ENCODE measurements at regions of chr7 and their contacts with region 1.

Region 1: DNA sequence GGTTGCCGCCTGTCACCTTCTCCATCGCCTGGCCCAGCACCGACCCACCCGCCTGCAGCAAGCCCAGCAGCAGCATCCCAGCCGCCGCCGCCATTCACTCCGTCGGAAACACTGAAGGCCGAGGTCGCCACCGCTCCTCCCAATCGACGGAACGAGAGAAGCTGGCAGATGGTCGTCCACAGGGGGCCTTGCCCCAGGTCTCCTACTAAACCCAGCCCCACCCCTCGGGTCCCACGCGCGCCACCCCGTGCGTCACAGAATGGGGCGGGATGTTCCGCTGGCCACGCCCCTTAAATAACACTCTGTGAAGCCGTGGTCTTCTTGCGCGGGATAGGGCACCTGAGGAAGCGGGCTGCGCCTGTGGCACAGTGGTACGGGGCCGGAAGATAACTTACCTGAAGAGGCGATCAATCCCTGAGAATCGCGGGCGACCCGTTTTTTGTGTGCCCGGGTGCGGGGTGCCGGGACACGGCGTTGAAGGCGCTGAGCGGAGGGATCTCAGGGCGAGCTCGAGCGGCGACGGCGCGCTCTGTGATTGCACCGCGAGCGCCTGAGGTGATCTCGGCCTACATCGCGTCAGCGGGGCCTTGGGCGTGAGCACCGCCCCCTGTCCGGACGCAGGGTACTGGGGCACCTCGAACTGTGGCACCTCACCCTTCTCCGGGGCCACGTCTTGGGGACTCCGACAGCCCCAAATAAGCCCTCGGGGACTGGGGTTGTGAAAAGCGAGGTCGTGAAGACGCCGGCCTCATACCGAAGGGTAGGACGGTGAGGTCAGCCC is at the start of gene CYP51A1:
- DNase-seq: peak; percentile 94
- ATAC-seq: peak; percentile 92
- H3K4me3 Mint-ChIP-seq: peak within 1 kb of the TSS; percentile 95
- H3K27ac Mint-ChIP-seq: peak within 1 kb of the TSS; percentile 100
- H3K4me1 Mint-ChIP-seq: peaks cover 34% of the 10 kb centered on the region
- H3K27me3 Mint-ChIP-seq: no peaks in the 10 kb centered on the region
- total RNA-seq, gene CYP51A1: 36.2 to 36.4 TPM

Region 2: GRCh38 chr7:91940572-91941341 is 193.7 kb before region 1 on chr7 and contains the start of gene AKAP9:
- CTCF ChIA-PET with region 1: interaction called, 4 read pairs
- POLR2A ChIA-PET with region 1: interaction called, 14 read pairs
- DNase-seq: peak; percentile 92
- ATAC-seq: peak; percentile 96
- H3K4me3 Mint-ChIP-seq: peak within 1 kb of the TSS; percentile 86
- H3K27ac Mint-ChIP-seq: peak within 1 kb of the TSS; percentile 95
- H3K4me1 Mint-ChIP-seq: peaks cover 22% of the 10 kb centered on the region
- H3K27me3 Mint-ChIP-seq: no peaks in the 10 kb centered on the region
- total RNA-seq, gene AKAP9: 32.7 to 41.5 TPM

Region 3: DNA sequence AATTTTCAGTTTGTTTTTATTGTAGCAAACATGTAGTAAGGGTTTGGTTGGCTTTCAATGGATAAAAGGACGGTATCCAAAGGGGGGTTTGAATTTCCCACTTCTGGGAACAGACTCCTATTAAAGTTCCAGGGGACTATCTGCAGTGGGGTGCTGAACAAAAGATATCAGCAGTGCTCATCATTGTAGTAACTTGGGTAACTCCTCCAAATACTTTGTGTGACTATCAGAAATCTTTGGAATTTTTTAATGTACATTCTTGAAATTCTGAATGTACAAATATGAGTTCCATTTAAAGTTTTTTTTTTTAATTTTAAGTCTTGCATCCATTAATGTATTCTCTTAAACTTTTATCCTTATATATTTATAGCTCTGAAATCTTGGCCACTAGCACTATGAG is 42.3 kb before region 1 on chr7:
- CTCF ChIA-PET with region 1: no interaction called
- POLR2A ChIA-PET with region 1: no interaction called
- DNase-seq: no peak
- ATAC-seq: no peak
- H3K4me3 Mint-ChIP-seq: no peak overlapping the region
- H3K27ac Mint-ChIP-seq: no peak overlapping the region
- H3K4me1 Mint-ChIP-seq: no peaks in the 10 kb centered on the region
- H3K27me3 Mint-ChIP-seq: no peaks in the 10 kb centered on the region

Region 4: DNA sequence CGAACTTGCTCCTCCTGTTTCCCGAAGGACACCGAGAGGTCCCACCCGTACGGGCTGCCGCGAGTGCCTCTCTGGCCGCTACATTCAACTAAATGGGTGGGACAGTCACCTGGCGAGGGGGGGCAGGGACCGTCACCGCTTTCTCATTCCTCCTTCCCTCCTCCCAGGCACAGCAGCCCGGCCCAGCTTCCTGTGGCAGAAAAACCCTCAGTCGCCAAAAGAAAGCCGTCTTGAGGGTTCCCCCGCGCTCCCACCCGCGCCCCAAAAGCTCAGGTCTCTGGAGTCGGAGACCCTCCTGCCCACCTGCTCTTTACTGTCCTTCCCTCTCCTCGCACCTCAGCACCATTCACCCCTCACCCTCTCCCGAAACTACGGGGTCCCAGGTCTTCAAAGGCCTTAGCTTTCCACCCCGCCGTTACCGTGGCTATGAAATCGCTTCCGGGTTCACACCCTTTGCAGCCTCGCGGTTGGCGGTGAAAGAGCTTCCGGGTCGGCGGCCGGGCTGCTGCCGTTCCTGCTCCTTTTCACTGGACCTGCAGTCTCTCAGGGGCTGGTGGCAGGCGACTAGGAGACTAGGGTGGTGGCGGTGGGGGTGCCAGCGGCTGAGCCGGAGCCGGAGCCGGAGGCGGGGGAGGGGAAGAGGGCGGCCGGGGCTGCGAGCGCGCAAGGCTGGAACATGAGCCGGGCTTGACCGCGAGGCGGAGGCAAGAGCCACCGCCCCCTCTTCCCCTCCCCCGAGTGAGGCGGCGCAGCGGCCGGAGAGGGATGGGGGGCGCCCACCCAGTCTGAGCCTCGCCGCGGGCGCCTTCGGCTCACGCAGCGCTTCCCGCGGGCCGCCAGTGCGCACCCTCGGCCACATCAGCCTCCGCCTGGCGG is 111.3 kb after region 1 on chr7 and contains the starts of genes ANKIB1 and KRIT1:
- CTCF ChIA-PET with region 1: interaction called, 4 read pairs
- POLR2A ChIA-PET with region 1: interaction called, 10 read pairs
- DNase-seq: peak; percentile 92
- ATAC-seq: peak; percentile 79
- H3K4me3 Mint-ChIP-seq: peak within 1 kb of the TSS; percentile 92
- H3K27ac Mint-ChIP-seq: peak within 1 kb of the TSS; percentile 97
- H3K4me1 Mint-ChIP-seq: peaks cover 37% of the 10 kb centered on the region
- H3K27me3 Mint-ChIP-seq: no peaks in the 10 kb centered on the region
- total RNA-seq, gene ANKIB1: 55.7 to 57.1 TPM
- total RNA-seq, gene KRIT1: 39.9 to 44.8 TPM

Region 5: DNA sequence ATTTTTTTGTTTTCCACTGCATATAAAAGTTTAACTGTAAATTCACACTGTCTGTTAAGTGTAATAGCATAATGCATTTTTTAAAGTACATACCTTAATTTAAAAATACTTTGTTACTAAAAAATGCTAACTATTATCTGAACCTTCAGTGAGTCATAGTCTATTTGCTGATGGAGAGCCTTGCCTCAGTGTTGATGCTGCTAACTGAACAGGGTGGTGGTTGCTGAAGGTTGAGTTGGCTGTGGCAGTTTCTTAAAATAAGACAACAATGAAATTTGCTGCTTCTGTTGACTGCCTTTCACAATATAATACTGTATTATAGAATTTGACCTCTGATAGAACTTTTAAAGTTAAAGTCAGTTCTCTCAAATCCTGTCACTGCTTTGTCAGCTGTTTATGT is 240.6 kb after region 1 on chr7:
- CTCF ChIA-PET with region 1: no interaction called
- POLR2A ChIA-PET with region 1: no interaction called
- DNase-seq: no peak
- ATAC-seq: no peak
- H3K4me3 Mint-ChIP-seq: no peak overlapping the region
- H3K27ac Mint-ChIP-seq: no peak overlapping the region
- H3K4me1 Mint-ChIP-seq: no peaks in the 10 kb centered on the region
- H3K27me3 Mint-ChIP-seq: no peaks in the 10 kb centered on the region